ENCODE measurements at regions of chr9 and their contacts with region 1.

Region 1: DNA sequence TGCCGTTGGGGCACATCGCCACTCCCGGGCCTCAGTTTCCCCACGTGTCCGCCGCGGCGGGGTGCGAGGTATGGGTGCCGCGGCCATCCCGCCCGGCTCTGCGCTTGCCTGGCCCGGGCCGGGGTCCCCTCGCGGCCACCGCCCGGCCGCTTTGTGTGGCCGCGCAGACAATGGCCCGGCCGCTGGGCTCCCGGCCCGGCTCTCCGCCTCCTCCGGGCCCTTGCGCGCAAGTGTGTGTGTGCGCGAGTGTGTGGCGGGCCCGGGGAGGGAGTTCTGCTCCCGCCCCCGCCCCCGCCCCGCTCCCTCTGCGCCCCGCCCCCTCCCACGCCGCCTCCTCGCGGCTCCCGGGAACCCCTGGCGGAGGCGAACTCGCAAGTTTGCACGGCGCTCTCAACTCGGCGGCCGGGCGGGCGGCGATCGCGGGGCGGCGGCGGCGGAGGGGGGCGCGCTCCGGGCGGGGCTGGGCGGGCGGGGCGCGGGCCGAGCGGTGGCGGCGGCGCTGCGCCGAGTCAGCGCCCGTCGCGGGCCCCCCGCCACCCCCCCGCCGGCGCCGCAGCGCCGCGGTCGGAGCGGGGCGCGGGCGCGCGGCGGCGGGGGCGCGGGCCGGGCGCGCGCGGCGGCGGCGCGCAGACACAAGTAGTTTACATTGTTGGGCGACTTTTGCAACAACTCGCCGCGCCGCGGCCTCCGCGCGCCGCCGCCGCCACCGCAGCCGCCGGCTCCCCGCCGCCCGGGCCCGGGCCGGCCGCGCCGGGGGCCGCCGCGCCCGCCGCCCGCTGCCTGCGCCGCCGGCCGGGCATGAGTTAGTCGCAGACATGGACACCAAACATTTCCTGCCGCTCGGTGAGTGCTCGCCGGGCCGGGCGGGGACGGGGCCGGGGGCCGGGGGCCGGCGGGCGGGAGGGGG is at the start of gene RXRA:
- DNase-seq: peak; percentile 86 to 94 (median 90)
- ATAC-seq: peak; percentile 19 to 72 (median 66)
- H3K4me3 ChIP-seq: peak within 1 kb of the TSS; percentile 50 to 99 (median 84)
- H3K27ac ChIP-seq: peak within 1 kb of the TSS; percentile 91 to 100 (median 97)
- H3K4me1 ChIP-seq: peaks cover 16 to 65% (median 50%) of the 10 kb centered on the region in 12 donors
- H3K27me3 ChIP-seq: no peaks in the 10 kb centered on the region
- CTCF ChIP-seq: peak in 6 of 12 donors; percentile 22 to 46 (median 30)
- POLR2A ChIP-seq: peak; percentile 4 to 89
- total RNA-seq, gene RXRA: 45.5 to 87.9 (median 52.9) TPM

Region 2: GRCh38 chr9:134163353-134164196 is 162.5 kb before region 1 on chr9:
- intact Hi-C with region 1: loop called in 1 of 10 experiments (anchors 5 kb)
- DNase-seq: peak; percentile 55 to 84 (median 76)
- ATAC-seq: peak in 2 of 4 donors; percentile 35 to 40
- H3K4me3 ChIP-seq: peak overlapping the region in 1 of 12 donors; percentile 28
- H3K27ac ChIP-seq: peak overlapping the region in 2 of 12 donors; percentile 20 to 83
- H3K4me1 ChIP-seq: peaks cover 0 to 16% (median 7%) of the 10 kb centered on the region in 12 donors
- H3K27me3 ChIP-seq: no peaks in the 10 kb centered on the region
- CTCF ChIP-seq: peak in 10 of 12 donors; percentile 21 to 56 (median 28)
- POLR2A ChIP-seq: no peak

Region 3: GRCh38 chr9:134178768-134179551 is 147.1 kb before region 1 on chr9:
- intact Hi-C with region 1: loop called in 9 of 10 experiments (anchors 5 to 10 kb)
- DNase-seq: peak in 4 of 5 donors; percentile 61 to 77 (median 67)
- ATAC-seq: peak; percentile 20 to 56 (median 38)
- H3K4me3 ChIP-seq: no peak overlapping the region
- H3K27ac ChIP-seq: no peak overlapping the region
- H3K4me1 ChIP-seq: peaks cover 0 to 30% (median 21%) of the 10 kb centered on the region in 12 donors
- H3K27me3 ChIP-seq: peaks cover 0 to 31% (median 10%) of the 10 kb centered on the region in 9 donors
- CTCF ChIP-seq: no peak
- POLR2A ChIP-seq: no peak

Region 4: GRCh38 chr9:134283111-134283515 is 43.0 kb before region 1 on chr9:
- intact Hi-C with region 1: loop called in 1 of 10 experiments (anchors 5 kb)
- DNase-seq: peak; percentile 45 to 87 (median 80)
- ATAC-seq: peak; percentile 69 to 84 (median 75)
- H3K4me3 ChIP-seq: no peak overlapping the region
- H3K27ac ChIP-seq: peak overlapping the region; percentile 21 to 83 (median 67)
- H3K4me1 ChIP-seq: peaks cover 0 to 25% (median 13%) of the 10 kb centered on the region in 12 donors
- H3K27me3 ChIP-seq: peaks cover 0 to 3% (median 0%) of the 10 kb centered on the region in 9 donors
- CTCF ChIP-seq: no peak
- POLR2A ChIP-seq: no peak

Region 5: DNA sequence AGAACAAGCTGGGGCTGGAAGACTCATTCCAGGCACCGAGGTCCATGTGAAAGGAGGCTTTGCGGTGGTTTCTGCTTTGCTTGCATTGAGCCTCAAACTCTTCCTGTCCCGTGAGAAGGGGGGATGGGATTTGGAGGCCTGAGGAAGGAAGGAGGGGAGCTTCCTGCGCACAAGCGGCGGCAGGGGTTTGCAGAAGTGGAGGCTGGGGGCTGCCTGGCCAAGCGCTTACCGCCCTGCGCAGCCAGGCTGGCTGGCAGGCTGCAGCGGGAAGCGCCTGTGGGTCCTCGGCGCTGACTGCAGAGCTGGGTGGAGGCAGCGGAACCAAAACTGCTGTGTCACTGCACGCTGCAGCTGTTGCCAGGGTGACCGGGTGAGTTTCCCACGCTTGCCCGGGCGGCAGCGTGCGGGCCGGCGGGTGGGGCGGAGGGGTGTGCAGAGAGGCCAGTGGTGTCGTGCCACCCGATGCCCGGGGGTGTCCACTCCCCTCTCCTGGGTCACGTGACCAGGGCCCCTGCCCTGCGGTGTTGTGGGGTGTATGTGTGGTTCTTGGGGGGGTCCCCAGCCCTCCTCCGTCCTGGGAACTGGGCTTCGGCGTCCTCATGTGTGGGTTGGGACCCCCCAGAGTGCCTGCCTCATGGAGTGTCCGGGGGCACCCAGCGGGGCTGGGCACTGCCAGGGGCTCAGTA is 81.2 kb after region 1 on chr9:
- intact Hi-C with region 1: loop called in 5 of 10 experiments (anchors 2 to 10 kb)
- DNase-seq: peak; percentile 93 to 96 (median 95)
- ATAC-seq: peak; percentile 65 to 81 (median 76)
- H3K4me3 ChIP-seq: peak overlapping the region in 10 of 12 donors; percentile 20 to 43 (median 34)
- H3K27ac ChIP-seq: peak overlapping the region; percentile 14 to 94 (median 82)
- H3K4me1 ChIP-seq: peaks cover 65 to 100% (median 95%) of the 10 kb centered on the region in 12 donors
- H3K27me3 ChIP-seq: no peaks in the 10 kb centered on the region
- CTCF ChIP-seq: no peak
- POLR2A ChIP-seq: peak in 1 of 2 donors; percentile 50

Region 6: GRCh38 chr9:134434894-134435506 is 108.9 kb after region 1 on chr9:
- intact Hi-C with region 1: loop called in 9 of 10 experiments (anchors 2 to 10 kb)
- DNase-seq: peak; percentile 94 to 98 (median 96)
- ATAC-seq: peak; percentile 81 to 89 (median 83)
- H3K4me3 ChIP-seq: peak overlapping the region in 7 of 12 donors; percentile 0 to 29 (median 11)
- H3K27ac ChIP-seq: peak overlapping the region; percentile 70 to 91 (median 84)
- H3K4me1 ChIP-seq: peaks cover 4 to 88% (median 58%) of the 10 kb centered on the region in 12 donors
- H3K27me3 ChIP-seq: no peaks in the 10 kb centered on the region
- CTCF ChIP-seq: no peak
- POLR2A ChIP-seq: no peak

Measured in heart left ventricle (tissue), 16 donors.